ENCODE measurements at regions of chr12 and their contacts with region 1.

Region 1: GRCh38 chr12:101823891-101824290 is 6.9 kb downstream of the GNPTAB start:
- DNase-seq: peak; percentile 86
- ATAC-seq: peak; percentile 91
- H3K4me3 Mint-ChIP-seq: peak overlapping the region; percentile 61
- H3K27ac Mint-ChIP-seq: peak overlapping the region; percentile 92
- H3K4me1 Mint-ChIP-seq: peaks cover 83% of the 10 kb centered on the region
- H3K27me3 Mint-ChIP-seq: no peaks in the 10 kb centered on the region

Region 2: DNA sequence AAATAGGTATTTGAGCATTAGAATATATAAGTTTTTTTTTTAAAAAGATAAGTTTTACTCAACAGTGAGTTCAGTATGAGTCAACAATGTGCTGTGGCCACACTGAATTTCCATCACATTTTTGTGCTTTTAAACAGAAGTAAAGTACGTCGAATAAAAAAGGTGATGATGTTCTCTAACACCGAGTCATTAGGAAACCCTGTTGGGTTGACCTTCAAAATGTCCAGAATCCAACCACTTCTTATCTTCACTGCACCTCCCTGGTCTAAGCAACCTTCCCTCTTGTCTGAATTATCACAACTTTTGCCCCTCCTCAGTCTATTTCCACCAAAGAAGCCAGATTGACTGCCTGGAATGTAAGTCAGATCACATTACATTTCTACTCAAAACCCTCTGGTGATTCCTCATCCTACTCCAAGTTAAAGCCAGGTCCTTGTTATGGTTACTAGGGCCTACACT is 41.6 kb before region 1 on chr12:
- CTCF ChIA-PET with region 1: interaction called, 25 read pairs
- DNase-seq: peak; percentile 52
- ATAC-seq: peak; percentile 61
- H3K4me3 Mint-ChIP-seq: no peak overlapping the region
- H3K27ac Mint-ChIP-seq: peak overlapping the region; percentile 82
- H3K4me1 Mint-ChIP-seq: peaks cover 53% of the 10 kb centered on the region
- H3K27me3 Mint-ChIP-seq: no peaks in the 10 kb centered on the region

Region 3: DNA sequence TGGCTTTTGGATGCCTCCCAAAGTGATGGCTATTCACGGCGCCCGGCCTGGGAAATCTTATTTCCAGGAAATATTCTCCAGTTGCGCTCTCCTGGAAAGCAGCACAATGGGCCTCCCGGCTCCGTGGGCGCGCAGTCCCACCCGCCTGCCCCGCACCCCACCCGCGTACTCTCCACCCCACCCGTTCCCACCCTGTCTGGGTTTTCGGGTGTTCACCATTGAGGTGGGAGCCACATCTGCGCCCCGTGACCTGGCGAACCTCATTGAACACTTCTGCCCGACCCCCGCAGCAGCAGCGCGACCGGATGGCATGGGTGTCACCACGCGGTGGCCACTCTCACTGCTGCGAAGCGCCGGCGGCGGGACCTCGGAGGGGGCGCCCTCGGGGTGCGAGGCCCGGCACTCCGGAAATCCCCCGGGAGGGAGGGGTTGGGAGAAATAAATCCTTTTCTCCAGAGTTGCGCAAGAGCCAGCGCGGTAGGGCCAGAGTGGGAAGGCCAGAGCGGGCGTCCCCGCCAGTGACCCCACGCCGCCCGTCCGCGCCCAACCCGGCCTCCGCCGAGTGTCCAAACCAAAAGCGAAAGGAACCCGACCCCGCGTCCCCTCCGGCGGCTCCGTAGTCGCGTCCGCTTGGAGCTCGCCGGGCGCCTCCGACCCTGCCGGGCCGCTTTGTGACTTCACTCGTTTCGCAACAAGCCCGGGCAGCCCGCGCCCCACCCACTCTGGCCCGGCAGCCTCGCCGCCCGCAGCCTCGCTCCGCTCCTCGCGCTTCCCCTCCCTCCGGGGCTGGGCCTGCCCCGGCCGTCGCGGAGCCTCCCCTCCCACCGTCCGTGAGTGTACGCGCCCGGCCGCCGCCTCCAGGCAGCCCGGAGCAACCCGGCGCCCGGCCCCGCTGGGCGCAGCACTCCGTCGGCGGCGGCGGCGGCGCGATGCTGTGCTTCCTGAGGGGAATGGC is 53.2 kb after region 1 on chr12 and contains the start of gene DRAM1:
- CTCF ChIA-PET with region 1: no interaction called
- DNase-seq: peak; percentile 85
- ATAC-seq: peak; percentile 90
- H3K4me3 Mint-ChIP-seq: peak within 1 kb of the TSS; percentile 98
- H3K27ac Mint-ChIP-seq: peak within 1 kb of the TSS; percentile 91
- H3K4me1 Mint-ChIP-seq: peaks cover 16% of the 10 kb centered on the region
- H3K27me3 Mint-ChIP-seq: no peaks in the 10 kb centered on the region
- total RNA-seq, gene DRAM1: 5.4 to 7.3 TPM

Region 4: GRCh38 chr12:102602521-102602920 is 778.6 kb after region 1 on chr12:
- CTCF ChIA-PET with region 1: no interaction called
- DNase-seq: no peak
- ATAC-seq: no peak
- H3K4me3 Mint-ChIP-seq: no peak overlapping the region
- H3K27ac Mint-ChIP-seq: no peak overlapping the region
- H3K4me1 Mint-ChIP-seq: no peaks in the 10 kb centered on the region
- H3K27me3 Mint-ChIP-seq: peaks cover 7% of the 10 kb centered on the region

Measured in activated CD8-positive, alpha-beta memory T cell treated with anti-CD3 and anti-CD28 coated beads, Interleukin-2, amount 10 ng/mL, durations not matched to agents 7 days and 5 days (primary cell).